Activated naive CD8-positive, alpha-beta T cell treated with anti-CD3 and anti-CD28 coated beads, Interleukin-2, amount 10 ng/mL, durations not matched to agents 7 days and 5 days (primary cell): ENCODE measurements at regions of chr10 and their contacts with region 1.

Region 1: GRCh38 chr10:113982769-113983168 is 60.9 kb upstream of the ADRB1 start:
- DNase-seq: no peak
- ATAC-seq: no peak
- H3K4me3 Mint-ChIP-seq: no peak overlapping the region
- H3K27ac Mint-ChIP-seq: no peak overlapping the region
- H3K4me1 Mint-ChIP-seq: peaks cover 6% of the 10 kb centered on the region
- H3K27me3 Mint-ChIP-seq: peaks cover 37% of the 10 kb centered on the region

Region 2: GRCh38 chr10:113960617-113961181 is 22.1 kb before region 1 on chr10:
- POLR2A ChIA-PET with region 1: interaction called, 13 read pairs
- DNase-seq: peak; percentile 38
- ATAC-seq: no peak
- H3K4me3 Mint-ChIP-seq: peak overlapping the region; percentile 66
- H3K27ac Mint-ChIP-seq: peak overlapping the region; percentile 81
- H3K4me1 Mint-ChIP-seq: peaks cover 26% of the 10 kb centered on the region
- H3K27me3 Mint-ChIP-seq: peaks cover 17% of the 10 kb centered on the region